ENCODE measurements at regions of chr2 and their contacts with region 1.

Region 1: DNA sequence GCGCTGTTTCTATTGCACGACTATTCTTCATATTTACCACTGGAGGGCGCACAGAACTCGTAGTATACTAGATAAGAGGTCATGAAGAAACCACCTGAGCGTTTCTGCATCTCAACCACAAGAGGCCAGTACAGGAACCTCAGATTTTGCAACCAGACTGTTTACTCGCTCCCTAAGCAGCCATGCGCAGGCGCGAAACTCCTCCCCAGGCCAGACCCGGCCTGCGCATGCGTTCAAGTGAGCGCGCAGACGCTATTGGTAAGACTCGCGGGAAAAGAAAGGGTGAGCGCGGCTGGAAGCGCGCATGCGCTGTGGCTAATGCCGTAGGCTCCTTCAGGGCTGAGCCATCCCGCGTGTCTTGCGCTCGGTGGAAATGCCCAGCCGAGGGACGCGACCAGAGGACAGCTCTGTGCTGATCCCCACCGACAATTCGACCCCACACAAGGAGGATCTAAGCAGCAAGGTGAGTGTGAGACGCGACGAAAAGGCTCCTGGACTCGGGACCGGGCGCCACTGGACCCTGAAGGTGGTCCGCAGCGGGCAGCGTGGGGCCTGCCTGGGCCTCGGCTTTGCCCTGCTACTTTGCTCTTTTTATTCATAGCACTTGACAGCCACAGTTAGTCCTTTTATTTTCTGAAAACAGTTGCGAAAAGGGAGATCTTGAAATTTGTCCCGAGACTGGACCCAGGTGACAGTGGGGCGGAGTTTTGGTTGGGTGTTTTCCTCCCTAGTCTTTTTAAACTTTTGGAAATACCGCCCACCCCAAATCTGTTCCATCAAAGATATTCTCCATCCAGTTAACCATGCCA is at the start of gene ASNSD1:
- DNase-seq: peak; percentile 98
- H3K4me3 Mint-ChIP-seq: no peak within 1 kb of the TSS
- H3K27ac Mint-ChIP-seq: no peak within 1 kb of the TSS
- H3K4me1 Mint-ChIP-seq: peaks cover 52% of the 10 kb centered on the region
- H3K27me3 Mint-ChIP-seq: no peaks in the 10 kb centered on the region
- total RNA-seq, gene ASNSD1: 35.4 to 38.2 TPM

Region 2: DNA sequence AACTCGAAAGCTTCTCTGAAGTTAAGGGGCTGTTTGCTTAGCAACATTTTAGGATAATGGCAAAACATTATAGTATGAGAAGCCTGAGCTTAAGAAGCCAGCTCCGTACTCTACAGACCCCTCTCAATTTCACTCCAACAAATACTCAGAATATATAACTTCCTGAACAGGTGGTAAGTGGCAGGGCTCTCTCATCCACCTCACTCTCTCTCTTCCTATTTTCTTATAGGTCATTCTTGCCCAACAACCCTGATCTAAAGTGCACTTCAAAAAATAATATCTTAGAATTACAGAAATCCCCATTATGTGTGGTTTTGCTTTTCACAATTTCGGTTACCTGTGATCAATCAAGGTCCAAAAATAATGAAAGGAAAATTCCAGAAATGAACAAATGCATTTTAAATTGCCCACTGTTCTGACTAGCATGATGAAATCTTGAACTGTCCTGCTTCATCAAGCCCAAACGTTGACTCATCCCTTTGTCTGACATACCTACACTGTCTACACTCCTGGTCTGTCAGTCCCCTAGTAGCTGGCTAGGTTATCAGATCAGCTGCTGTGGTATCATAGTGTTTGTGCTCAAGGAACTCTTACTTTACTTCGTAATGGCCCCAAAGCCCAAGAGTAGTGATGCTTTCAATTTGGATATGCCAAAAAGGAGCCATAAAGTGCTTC is 358.9 kb before region 1 on chr2:
- CTCF ChIA-PET with region 1: no interaction called
- intact Hi-C with region 1: loop called (anchors 5 kb)
- DNase-seq: peak; percentile 41
- H3K4me3 Mint-ChIP-seq: peak overlapping the region; percentile 7
- H3K27ac Mint-ChIP-seq: peak overlapping the region; percentile 91
- H3K4me1 Mint-ChIP-seq: peaks cover 79% of the 10 kb centered on the region
- H3K27me3 Mint-ChIP-seq: no peaks in the 10 kb centered on the region

Region 3: DNA sequence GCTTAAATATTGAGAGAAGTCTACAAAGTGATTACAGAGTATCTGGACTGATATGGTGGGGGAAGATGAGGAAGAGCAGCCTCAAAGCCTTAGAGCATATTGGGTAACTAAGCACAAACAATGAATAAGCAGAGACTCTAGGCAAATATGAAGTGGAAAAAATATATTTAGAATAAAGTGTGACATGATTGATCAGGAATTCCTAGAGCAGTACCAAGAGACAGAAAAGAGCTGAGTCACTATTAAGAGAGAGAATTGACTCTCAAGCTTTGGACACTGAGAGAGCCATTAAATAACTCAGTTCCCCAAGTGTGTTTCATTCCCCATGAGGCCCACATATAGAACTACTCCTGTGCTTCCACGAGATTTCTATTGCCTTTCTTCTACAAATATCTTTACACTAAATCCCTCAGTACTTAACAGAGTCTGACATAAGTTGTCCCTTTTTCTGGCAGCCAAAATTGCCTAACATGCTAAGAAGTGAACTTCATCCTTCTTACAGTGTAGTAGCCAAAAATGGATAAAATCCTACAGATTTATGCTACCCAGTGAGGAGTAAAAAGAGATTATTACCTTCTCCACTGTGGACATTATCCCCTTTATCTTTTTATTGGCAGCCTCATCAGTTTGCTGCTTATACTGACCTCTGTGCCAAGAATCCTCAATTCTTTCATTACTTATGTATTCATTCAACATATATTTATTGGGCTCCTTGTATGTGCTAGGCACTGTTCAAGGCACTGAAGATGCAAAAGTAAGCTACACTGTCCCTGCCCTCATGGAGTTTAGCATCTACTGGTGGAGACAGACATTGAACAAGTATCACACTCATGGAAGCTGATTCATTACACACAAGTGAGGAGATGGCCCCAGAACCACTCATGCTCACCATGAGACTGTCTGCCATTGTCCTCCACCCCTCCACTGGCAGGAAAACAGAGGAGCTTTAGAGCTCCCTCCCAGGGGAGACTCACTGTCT is 126.2 kb before region 1 on chr2:
- CTCF ChIA-PET with region 1: no interaction called
- intact Hi-C with region 1: no loop called
- DNase-seq: no peak
- H3K4me3 Mint-ChIP-seq: no peak overlapping the region
- H3K27ac Mint-ChIP-seq: no peak overlapping the region
- H3K4me1 Mint-ChIP-seq: no peaks in the 10 kb centered on the region
- H3K27me3 Mint-ChIP-seq: no peaks in the 10 kb centered on the region

Region 4: GRCh38 chr2:189651284-189651683 is 10.1 kb before region 1 on chr2:
- CTCF ChIA-PET with region 1: interaction called, 10 read pairs
- intact Hi-C with region 1: no loop called
- DNase-seq: no peak
- H3K4me3 Mint-ChIP-seq: no peak overlapping the region
- H3K27ac Mint-ChIP-seq: no peak overlapping the region
- H3K4me1 Mint-ChIP-seq: peaks cover 4% of the 10 kb centered on the region
- H3K27me3 Mint-ChIP-seq: no peaks in the 10 kb centered on the region

Region 5: GRCh38 chr2:189751080-189751658 is 89.8 kb after region 1 on chr2:
- CTCF ChIA-PET with region 1: interaction called, 13 read pairs
- intact Hi-C with region 1: loop called (anchors 1 kb)
- DNase-seq: peak; percentile 59
- H3K4me3 Mint-ChIP-seq: no peak overlapping the region
- H3K27ac Mint-ChIP-seq: no peak overlapping the region
- H3K4me1 Mint-ChIP-seq: no peaks in the 10 kb centered on the region
- H3K27me3 Mint-ChIP-seq: no peaks in the 10 kb centered on the region

Region 6: DNA sequence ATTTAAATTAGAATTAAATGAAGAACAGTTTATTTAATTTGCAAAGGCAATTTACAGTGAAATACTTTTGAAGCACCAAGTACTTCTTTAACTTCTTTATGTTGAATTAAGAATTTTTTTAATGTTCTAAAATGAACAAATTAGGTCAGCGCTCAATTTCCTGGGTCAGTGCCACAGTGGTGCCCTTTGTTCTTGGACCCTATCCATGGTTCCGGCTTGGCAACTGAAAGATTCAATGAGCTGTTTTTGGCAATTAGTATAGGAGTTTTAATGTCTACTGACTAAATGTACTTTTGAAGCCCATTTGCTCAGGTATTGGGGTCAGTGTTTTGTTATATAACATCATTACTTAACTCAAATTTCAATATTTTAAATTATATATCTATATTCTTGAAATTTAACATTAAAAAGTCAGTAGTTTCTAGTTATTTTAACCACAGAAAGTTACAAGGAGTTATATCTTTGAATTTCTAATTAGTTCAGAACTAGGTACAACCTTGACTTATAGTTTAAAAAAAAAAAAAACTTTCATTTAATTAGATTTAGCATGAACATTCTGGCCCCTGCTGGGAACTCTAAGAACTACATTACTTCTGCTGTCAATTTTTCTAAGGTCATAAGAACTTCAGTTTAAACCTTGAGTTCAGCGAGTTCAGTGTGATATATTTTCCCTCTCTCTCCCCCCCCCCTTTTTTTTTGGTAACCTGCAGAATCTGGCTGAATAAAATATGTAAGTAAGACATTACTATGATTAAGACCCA is 408.8 kb after region 1 on chr2:
- CTCF ChIA-PET with region 1: interaction called, 3 read pairs
- intact Hi-C with region 1: loop called (anchors 1 kb)
- DNase-seq: peak; percentile 54
- H3K4me3 Mint-ChIP-seq: no peak overlapping the region
- H3K27ac Mint-ChIP-seq: no peak overlapping the region
- H3K4me1 Mint-ChIP-seq: no peaks in the 10 kb centered on the region
- H3K27me3 Mint-ChIP-seq: no peaks in the 10 kb centered on the region

Region 7: DNA sequence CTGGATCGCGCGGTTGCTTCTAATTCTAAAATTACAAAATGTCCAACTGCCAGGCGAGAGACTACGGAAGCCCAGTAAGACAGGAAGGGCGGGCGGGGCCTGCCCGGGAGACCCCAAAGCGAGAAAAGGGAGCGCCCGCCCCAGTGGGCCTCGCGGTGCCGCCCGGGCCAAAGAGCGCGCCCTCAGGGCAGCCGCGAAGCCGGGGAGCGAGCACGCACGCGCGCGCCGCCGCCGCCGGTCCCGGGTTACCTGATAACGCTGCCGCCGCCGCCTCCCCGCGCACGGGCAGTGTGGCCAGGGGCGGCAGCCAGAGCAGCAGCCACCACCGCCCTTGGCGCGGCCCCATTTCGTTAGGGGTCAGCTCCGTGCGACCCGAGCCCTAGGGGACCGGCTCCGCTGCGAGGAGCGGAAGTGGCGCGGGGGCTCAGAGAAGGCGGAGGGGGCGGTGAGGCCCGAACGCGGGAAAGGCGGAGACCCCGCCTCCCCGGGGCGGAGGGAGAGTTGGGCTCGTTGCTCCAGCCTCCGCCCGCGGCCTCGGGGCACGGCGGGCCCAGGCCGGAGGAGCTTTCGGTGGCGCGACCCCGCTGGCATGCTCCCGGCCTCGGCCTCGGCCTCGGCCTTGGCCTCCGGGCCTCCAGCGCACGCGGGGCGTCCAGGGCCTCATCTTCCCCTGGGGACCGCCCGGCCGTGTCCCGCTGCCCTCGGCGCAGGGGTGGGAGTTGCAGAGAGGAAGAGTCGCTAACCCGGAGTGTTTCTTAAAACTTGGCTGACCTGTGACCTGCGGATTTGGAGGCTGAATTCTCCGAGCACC is 873.2 kb after region 1 on chr2 and contains the start of gene NEMP2:
- CTCF ChIA-PET with region 1: no interaction called
- intact Hi-C with region 1: loop called (anchors 5 kb)
- DNase-seq: peak; percentile 82
- H3K4me3 Mint-ChIP-seq: peak within 1 kb of the TSS; percentile 96
- H3K27ac Mint-ChIP-seq: peak within 1 kb of the TSS; percentile 100
- H3K4me1 Mint-ChIP-seq: peaks cover 51% of the 10 kb centered on the region
- H3K27me3 Mint-ChIP-seq: no peaks in the 10 kb centered on the region
- total RNA-seq, gene NEMP2: 32.9 to 34.2 TPM

Measured in activated naive CD4-positive, alpha-beta T cell treated with anti-CD3 and anti-CD28 coated beads for 36 hours (primary cell).